ENCODE measurements at regions of chr18 and their contacts with region 1.

Region 1: DNA sequence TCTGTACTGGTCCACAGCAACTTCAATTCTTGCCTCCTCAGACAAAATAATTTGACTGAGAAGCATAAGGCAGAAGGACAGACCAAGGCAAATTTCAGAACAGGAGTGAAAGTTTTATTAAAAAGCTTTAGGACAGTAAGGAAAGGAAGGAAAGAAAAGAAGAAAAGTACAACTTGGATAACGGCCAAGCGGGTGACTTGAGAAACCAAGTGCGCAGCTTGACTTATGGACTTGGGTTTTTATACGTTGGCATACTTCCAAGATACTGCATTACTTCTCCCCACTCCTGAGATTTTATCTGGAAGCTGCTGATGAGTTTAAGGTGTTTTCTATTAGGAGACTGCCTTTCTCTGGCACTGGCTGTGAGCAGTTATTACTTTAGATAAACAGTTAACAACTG is 64.7 kb downstream of the CCDC178 start:
- DNase-seq: no peak
- CTCF ChIP-seq: no peak

Region 2: GRCh38 chr18:31760695-31761094 is 1615.1 kb before region 1 on chr18 and contains the start of gene SLC25A52:
- in situ Hi-C with region 1: no loop called
- DNase-seq: no peak
- CTCF ChIP-seq: no peak

Region 3: GRCh38 chr18:33282709-33283333 is 93.0 kb before region 1 on chr18:
- in situ Hi-C with region 1: loop called (anchors 25 kb)
- DNase-seq: no peak
- CTCF ChIP-seq: no peak

Measured in GM13976 (cell line).